Adrenal gland (tissue), 19 donors: ENCODE measurements at regions of chr10 and their contacts with region 1.

Region 1: GRCh38 chr10:123582084-123582989 is 83.8 kb upstream of the GPR26 start:
- DNase-seq: peak; percentile 75 to 91 (median 83)
- H3K4me3 ChIP-seq: no peak overlapping the region
- H3K27ac ChIP-seq: no peak overlapping the region
- H3K4me1 ChIP-seq: peaks cover 0 to 5% of the 10 kb centered on the region in 2 donors
- H3K27me3 ChIP-seq: peaks cover 22% of the 10 kb centered on the region
- CTCF ChIP-seq: peak; percentile 61 to 84 (median 75)
- POLR2A ChIP-seq: no peak

Region 2: GRCh38 chr10:123402656-123403055 is 179.7 kb before region 1 on chr10:
- intact Hi-C with region 1: no loop called
- DNase-seq: no peak
- H3K4me3 ChIP-seq: no peak overlapping the region
- H3K27ac ChIP-seq: no peak overlapping the region
- H3K4me1 ChIP-seq: no peaks in the 10 kb centered on the region
- H3K27me3 ChIP-seq: no peaks in the 10 kb centered on the region
- CTCF ChIP-seq: no peak
- POLR2A ChIP-seq: no peak

Region 3: DNA sequence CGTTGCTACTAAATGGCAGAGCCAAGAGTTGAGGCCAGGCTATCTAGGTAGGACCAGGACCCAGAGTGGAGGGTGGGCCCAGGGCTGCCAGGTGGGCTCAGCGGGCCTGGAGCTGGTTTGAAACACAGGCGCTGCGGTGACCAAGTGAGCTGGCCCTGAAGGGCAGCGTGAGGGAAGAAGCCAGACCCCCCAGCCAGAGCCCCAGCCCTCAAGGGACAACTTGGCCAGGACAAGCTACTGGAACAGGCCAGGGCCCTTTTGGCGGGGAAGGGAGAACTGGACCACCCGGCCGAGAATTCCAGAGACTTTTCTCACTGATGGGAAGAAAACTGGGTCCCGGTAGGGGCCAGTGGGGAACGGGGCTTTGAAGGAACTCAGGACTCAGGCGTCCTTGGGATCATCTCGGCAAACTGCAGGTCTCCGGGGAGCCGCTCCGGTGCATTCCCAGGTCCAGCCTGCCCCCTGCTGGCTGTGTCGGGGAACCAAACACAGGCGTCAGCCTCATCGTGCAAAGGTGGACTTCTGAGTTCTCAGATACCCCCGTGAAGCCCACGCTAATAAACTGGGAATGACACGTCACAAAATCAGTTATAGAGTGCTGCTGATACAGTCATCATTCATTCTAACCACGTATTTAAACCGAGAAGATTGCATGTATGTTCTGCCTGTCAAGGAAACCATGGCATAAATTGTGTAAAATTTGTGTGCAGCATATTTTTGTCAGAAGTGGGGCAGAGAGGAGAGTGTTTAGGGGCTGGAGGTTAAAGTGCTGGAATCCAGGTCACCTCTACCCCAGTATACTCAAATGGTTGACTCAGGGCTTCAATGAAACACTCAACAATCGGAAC is 385.3 kb after region 1 on chr10:
- intact Hi-C with region 1: loop called (anchors 1 to 5 kb)
- DNase-seq: peak; percentile 57 to 85 (median 78)
- H3K4me3 ChIP-seq: no peak overlapping the region
- H3K27ac ChIP-seq: no peak overlapping the region
- H3K4me1 ChIP-seq: peaks cover 0 to 3% of the 10 kb centered on the region in 2 donors
- H3K27me3 ChIP-seq: peaks cover 2% of the 10 kb centered on the region
- CTCF ChIP-seq: peak; percentile 77 to 93 (median 88)
- POLR2A ChIP-seq: no peak